BJ (cell line): ENCODE measurements at regions of chr1 and their contacts with region 1.

Region 1: GRCh38 chr1:159071970-159072582 is 4.5 kb downstream of the AIM2 start:
- DNase-seq: no peak
- H3K4me3 ChIP-seq: no peak overlapping the region
- H3K27me3 ChIP-seq: peaks cover 4% of the 10 kb centered on the region; the same call in 1 of the 2 replicates
- CTCF ChIP-seq: peak; percentile 62

Region 2: DNA sequence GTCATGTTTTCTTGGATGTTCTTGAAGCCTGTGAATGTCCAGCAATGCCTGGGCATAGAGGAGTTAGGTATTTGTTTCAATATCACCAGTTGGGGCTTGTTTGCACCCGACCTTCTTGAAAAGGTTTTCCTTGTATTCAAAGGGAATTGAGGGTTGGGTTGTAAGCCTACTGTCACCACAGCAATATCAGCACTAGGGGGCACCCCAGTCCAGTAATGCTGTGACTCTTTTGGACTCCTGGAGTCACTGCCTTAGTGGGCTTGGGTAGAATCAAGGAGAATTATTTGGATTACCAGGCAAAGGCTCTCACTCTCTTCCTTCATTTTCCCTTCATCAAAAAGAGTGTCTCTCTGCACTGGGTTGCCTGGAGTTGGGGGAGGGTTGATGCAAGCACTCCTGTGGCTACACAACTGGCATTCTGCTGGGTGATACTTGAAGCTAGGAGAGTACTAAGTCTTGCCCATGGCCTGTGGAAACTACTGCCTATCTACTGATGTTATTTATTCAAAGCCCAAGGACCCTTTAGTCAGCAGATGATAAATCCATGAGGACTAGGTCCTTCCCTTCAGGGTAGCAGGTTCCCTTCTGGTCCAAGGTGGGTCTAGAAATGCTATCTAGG is 565.6 kb before region 1 on chr1:
- CTCF ChIA-PET with region 1: interaction called, 11 read pairs
- POLR2A ChIA-PET with region 1: no interaction called
- DNase-seq: no peak
- H3K4me3 ChIP-seq: no peak overlapping the region
- H3K27me3 ChIP-seq: no peaks in the 10 kb centered on the region
- CTCF ChIP-seq: peak; percentile 49